Right cardiac atrium (tissue), 5 donors: ENCODE measurements at regions of chr4 and their contacts with region 1.

Region 1: GRCh38 chr4:8391972-8392371 is 48.6 kb downstream of the ACOX3 start:
- DNase-seq: peak in 1 of 3 donors; percentile 69
- ATAC-seq: peak in 1 of 2 donors; percentile 20
- H3K4me3 ChIP-seq: no peak overlapping the region
- H3K27ac ChIP-seq: peak overlapping the region; percentile 43
- H3K4me1 ChIP-seq: peaks cover 11% of the 10 kb centered on the region
- H3K27me3 ChIP-seq: no peaks in the 10 kb centered on the region

Region 2: GRCh38 chr4:8241895-8242696 is 149.9 kb before region 1 on chr4:
- intact Hi-C with region 1: loop called in 1 of 4 experiments (anchors 5 kb)
- DNase-seq: peak; percentile 92 to 97 (median 96)
- ATAC-seq: peak; percentile 79 to 85
- H3K4me3 ChIP-seq: no peak overlapping the region
- H3K27ac ChIP-seq: peak overlapping the region; percentile 76
- H3K4me1 ChIP-seq: peaks cover 6% of the 10 kb centered on the region
- H3K27me3 ChIP-seq: no peaks in the 10 kb centered on the region

Region 3: DNA sequence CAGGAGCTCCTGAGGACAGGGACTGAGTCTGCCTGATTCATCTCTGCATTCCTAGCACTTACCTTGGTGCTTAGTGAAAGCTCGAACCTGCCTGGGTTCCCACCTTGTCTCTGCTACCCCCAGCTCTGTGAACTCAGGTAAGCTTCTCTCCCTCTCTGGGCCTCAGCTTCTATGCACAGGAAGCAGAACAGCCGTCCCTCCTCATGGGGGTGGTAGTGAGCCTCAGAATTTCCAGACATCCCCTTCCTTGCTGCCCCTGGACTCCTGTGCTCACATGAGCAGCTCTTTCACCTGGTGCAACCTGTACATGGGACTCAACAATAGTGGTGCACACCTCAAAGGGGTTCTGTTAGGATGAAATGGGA is 71.6 kb before region 1 on chr4:
- intact Hi-C with region 1: loop called in 1 of 4 experiments (anchors 10 kb)
- DNase-seq: no peak
- ATAC-seq: peak; percentile 6 to 20
- H3K4me3 ChIP-seq: no peak overlapping the region
- H3K27ac ChIP-seq: peak overlapping the region; percentile 21
- H3K4me1 ChIP-seq: peaks cover 19% of the 10 kb centered on the region
- H3K27me3 ChIP-seq: no peaks in the 10 kb centered on the region

Region 4: GRCh38 chr4:8340781-8341241 is 51.2 kb before region 1 on chr4:
- intact Hi-C with region 1: loop called in 2 of 4 experiments (anchors 5 to 10 kb)
- DNase-seq: peak; percentile 90 to 97 (median 94)
- ATAC-seq: peak; percentile 94 to 96
- H3K4me3 ChIP-seq: no peak overlapping the region
- H3K27ac ChIP-seq: peak overlapping the region; percentile 90
- H3K4me1 ChIP-seq: peaks cover 6% of the 10 kb centered on the region
- H3K27me3 ChIP-seq: no peaks in the 10 kb centered on the region

Region 5: DNA sequence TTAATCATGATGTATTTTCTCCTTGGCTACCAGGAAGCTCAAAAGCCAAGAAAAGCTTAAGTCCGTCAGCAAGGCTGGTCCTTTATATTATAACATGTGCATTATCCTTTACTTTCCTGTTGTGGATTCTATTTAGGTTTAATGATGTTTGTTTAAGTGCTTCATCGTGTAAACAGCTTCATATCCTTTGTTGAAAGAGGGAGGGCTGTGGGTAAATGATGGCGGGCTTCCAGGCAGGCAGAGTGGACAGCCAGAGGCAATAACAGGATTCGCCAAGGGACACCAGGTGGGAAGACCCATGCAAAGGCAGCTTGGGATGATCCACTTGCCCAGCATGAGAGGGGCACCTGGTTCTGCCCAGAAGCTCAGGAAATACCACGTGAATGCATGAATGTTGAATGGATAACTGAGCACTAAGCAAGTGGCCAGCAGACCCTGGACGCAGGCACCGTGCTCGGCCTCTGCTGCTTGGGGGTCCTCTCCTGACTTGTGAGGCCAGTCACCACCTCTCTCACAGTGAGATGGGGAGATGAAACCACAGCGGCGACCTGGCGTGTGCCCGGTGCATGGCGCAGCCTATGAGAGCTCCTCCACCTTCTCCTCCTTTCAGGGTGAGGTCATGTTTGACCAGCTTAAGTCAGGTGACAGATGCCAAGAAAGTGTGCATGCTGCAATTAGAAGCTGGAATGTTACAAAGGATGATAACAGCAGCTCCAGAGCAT is 404.0 kb after region 1 on chr4:
- intact Hi-C with region 1: no loop called
- DNase-seq: peak in 1 of 3 donors; percentile 15
- ATAC-seq: no peak
- H3K4me3 ChIP-seq: no peak overlapping the region
- H3K27ac ChIP-seq: no peak overlapping the region
- H3K4me1 ChIP-seq: no peaks in the 10 kb centered on the region
- H3K27me3 ChIP-seq: no peaks in the 10 kb centered on the region